Sigmoid colon (tissue), 7 donors: ENCODE measurements at regions of chr1 and their contacts with region 1.

Region 1: GRCh38 chr1:202716654-202717053 is 6.4 kb upstream of the SYT2 start:
- DNase-seq: no peak
- H3K4me3 ChIP-seq: no peak overlapping the region
- H3K27ac ChIP-seq: no peak overlapping the region
- H3K4me1 ChIP-seq: no peaks in the 10 kb centered on the region
- H3K27me3 ChIP-seq: peaks cover 0 to 12% (median 0%) of the 10 kb centered on the region in 3 donors
- CTCF ChIP-seq: no peak
- EP300 ChIP-seq: no peak
- POLR2A ChIP-seq: no peak

Region 2: GRCh38 chr1:202365092-202365815 is 351.4 kb before region 1 on chr1:
- intact Hi-C with region 1: no loop called
- DNase-seq: no peak
- H3K4me3 ChIP-seq: no peak overlapping the region
- H3K27ac ChIP-seq: no peak overlapping the region
- H3K4me1 ChIP-seq: peaks cover 0 to 13% (median 6%) of the 10 kb centered on the region in 4 donors
- H3K27me3 ChIP-seq: no peaks in the 10 kb centered on the region
- CTCF ChIP-seq: no peak
- EP300 ChIP-seq: no peak
- POLR2A ChIP-seq: no peak

Region 3: DNA sequence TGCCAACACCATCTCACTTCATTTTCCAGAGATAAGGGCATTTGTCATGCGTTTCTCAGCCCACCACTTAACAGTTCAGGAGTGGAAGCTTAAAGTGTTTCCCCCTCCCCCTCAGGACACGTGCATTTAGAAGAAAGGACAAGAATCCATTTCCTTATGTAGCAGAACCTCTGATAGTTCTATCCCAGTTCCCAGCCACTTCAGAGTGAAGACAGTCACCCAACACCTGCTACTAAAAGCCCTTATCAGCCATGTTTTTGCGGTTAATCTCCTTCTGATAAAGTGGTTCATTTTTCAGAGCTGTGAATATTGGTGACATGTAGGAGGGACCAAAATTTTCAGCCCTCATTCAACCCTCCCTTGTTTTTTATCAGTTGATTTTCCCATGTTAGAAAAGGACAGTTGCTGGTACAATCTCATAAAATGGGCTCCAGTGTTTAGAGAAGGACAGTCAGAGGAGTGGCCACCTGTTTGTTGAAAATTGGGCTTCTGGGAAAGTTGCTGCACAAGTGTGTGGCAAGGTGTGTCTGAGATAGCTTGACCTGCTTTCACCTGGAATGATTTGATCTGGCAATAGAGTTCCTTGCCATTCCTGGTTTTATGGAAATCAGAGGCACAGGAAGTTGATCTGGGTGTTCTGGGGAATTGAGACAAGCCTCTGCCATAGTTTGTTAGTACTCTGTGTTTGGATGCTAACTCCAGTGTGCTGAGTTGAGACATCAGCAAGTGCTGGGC is 254.1 kb before region 1 on chr1:
- intact Hi-C with region 1: loop called (anchors 5 kb)
- DNase-seq: no peak
- H3K4me3 ChIP-seq: no peak overlapping the region
- H3K27ac ChIP-seq: no peak overlapping the region
- H3K4me1 ChIP-seq: peaks cover 0 to 24% (median 20%) of the 10 kb centered on the region in 4 donors
- H3K27me3 ChIP-seq: no peaks in the 10 kb centered on the region
- CTCF ChIP-seq: no peak
- EP300 ChIP-seq: no peak
- POLR2A ChIP-seq: no peak